Pancreas (tissue), 10 donors: ENCODE measurements at regions of chr17 and their contacts with region 1.

Region 1: DNA sequence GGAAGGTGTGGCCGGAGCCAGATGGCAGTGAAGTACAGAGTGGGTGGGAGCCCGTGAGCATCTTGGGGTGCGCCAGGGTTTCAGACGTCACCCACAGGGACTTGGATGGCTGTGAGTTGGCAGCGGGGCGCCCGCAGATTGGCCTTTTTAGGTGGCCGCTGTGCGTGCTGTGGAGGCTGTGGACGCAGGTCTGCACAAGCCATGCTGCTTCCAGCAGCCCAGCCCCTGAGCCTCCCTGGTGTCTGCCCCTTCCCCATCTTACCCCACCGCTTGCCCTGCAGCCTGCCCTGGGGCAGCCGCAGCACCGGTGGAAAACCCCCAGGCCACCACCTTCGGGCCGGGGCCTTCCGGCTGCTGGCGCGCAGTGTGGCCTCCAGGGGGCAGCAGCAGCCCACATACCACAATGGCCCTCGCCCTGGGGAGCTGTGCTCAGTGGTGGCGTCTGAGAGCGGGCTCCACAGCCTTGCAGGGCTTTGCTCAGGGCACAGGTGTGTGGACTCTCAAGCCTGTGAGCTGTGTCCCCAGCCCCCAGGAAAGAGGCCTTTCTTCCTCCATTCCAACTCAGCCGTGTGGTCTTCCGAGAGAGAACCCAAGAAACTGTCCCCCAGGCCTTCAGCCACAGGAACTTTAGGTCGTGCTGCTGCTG is 11.8 kb downstream of the ENDOV start:
- DNase-seq: peak; percentile 71 to 95 (median 86)
- ATAC-seq: peak; percentile 88 to 99 (median 96)
- H3K4me3 ChIP-seq: no peak overlapping the region
- H3K27ac ChIP-seq: no peak overlapping the region
- H3K4me1 ChIP-seq: peaks cover 0 to 3% (median 0%) of the 10 kb centered on the region in 3 donors
- H3K27me3 ChIP-seq: no peaks in the 10 kb centered on the region
- CTCF ChIP-seq: peak; percentile 91 to 98 (median 96)

Region 2: DNA sequence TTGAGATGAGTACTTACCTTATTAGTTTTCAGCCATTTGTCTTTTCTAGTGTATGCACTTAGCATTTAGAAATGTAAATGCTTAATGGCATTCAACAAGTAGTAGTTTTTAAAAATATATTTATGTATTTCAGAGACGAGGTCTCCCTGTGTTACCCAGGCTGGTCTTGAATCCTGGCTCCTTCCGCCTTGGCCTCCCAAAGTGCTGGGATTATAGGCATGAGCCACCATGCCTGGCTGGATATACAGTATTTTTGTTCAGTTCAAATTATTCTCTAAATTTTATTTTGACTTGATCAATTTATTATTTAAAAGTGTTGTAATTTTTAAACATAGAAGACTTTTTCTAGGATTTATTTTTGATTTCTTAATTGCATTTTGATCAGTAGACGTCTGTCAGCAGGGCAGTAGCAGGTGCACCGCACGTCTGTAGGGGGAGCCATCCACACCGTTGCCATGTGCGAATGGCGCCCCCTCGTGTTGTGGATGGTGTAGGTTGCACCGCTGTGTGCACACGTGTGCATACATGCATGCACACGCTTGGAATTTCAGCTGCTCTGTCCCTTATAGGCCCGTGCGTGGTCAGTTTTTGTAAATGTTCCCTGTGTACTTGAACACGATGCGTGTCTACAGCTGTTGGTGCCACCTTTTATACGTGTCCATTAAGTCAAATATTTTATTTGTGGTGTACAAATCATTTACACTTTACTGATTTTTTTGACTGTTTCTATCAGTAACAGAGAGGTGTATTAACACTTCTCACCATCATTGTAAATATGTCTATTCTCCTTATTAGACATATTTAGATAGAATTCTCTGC is 148.5 kb after region 1 on chr17:
- intact Hi-C with region 1: loop called in 2 of 3 experiments (anchors 5 kb)
- DNase-seq: peak; percentile 71 to 95 (median 86)
- ATAC-seq: peak; percentile 94 to 100 (median 99)
- H3K4me3 ChIP-seq: no peak overlapping the region
- H3K27ac ChIP-seq: no peak overlapping the region
- H3K4me1 ChIP-seq: no peaks in the 10 kb centered on the region
- H3K27me3 ChIP-seq: no peaks in the 10 kb centered on the region
- CTCF ChIP-seq: peak; percentile 90 to 98 (median 95)

Region 3: DNA sequence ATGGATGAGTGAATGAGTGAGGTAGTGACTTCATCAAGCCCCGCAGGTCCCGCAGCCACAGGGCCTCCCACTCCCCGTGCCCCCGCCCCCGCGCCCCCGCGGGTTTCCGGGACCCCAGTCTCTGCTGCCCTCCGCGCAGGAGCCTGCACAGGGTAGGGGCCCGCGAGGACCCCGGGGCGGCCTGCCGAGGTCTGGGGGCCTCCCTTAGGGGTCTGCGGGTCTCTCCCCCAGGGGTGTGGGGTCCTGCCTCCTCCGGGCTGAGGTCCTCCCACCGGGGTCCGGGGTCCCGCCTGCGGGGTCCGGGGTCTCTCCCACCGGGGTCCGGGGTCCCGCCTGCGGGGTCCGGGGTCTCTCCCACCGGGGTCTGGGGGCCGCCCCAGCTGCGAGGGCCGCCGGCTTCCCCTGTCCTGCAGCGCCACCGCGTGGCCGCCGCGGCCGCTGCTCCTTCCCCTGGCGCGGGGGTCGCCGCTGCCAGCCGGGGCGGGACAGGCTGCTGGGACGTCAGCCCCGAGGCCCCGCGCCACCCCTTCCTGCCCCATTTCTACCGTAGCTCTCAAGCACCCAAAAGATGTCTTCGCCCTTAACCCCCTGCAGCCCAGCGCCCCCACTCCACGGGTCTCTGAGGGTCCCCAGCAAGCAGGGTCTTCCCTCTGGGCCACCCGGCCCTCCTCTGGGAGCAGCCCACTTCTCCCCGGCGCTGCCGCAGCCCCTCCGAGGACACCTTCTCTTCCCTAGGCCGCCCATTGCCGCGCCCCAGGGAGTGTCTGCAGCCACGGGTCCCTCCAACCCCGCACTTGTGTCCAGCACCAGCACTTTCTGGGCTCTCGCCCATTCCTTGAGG is 554.5 kb after region 1 on chr17:
- intact Hi-C with region 1: loop called in 2 of 3 experiments (anchors 2 to 5 kb)
- DNase-seq: peak in 2 of 6 donors; percentile 42 to 77
- ATAC-seq: peak in 3 of 4 donors; percentile 35 to 63 (median 60)
- H3K4me3 ChIP-seq: no peak overlapping the region
- H3K27ac ChIP-seq: no peak overlapping the region
- H3K4me1 ChIP-seq: peaks cover 0 to 7% (median 0%) of the 10 kb centered on the region in 3 donors
- H3K27me3 ChIP-seq: no peaks in the 10 kb centered on the region
- CTCF ChIP-seq: peak; percentile 52 to 74 (median 61)